CD4-positive, alpha-beta T cell (primary cell): ENCODE measurements at regions of chr22 and their contacts with region 1.

Region 1: GRCh38 chr22:23786752-23787599 is at the start of gene SMARCB1:
- DNase-seq: peak; percentile 80 to 96 (median 88)
- ATAC-seq: peak; percentile 76
- H3K4me3 ChIP-seq: peak within 1 kb of the TSS; percentile 83
- H3K4me3 Mint-ChIP-seq: peak within 1 kb of the TSS; percentile 91
- H3K27ac ChIP-seq: peak within 1 kb of the TSS; percentile 93 to 98
- H3K27ac Mint-ChIP-seq: peak within 1 kb of the TSS; percentile 90
- H3K4me1 ChIP-seq: peaks cover 44% of the 10 kb centered on the region
- H3K4me1 Mint-ChIP-seq: peaks cover 35% of the 10 kb centered on the region
- H3K27me3 ChIP-seq: no peaks in the 10 kb centered on the region
- H3K27me3 Mint-ChIP-seq: no peaks in the 10 kb centered on the region
- CTCF ChIP-seq: no peak
- total RNA-seq, gene SMARCB1: 40.3 to 41.7 TPM

Region 2: DNA sequence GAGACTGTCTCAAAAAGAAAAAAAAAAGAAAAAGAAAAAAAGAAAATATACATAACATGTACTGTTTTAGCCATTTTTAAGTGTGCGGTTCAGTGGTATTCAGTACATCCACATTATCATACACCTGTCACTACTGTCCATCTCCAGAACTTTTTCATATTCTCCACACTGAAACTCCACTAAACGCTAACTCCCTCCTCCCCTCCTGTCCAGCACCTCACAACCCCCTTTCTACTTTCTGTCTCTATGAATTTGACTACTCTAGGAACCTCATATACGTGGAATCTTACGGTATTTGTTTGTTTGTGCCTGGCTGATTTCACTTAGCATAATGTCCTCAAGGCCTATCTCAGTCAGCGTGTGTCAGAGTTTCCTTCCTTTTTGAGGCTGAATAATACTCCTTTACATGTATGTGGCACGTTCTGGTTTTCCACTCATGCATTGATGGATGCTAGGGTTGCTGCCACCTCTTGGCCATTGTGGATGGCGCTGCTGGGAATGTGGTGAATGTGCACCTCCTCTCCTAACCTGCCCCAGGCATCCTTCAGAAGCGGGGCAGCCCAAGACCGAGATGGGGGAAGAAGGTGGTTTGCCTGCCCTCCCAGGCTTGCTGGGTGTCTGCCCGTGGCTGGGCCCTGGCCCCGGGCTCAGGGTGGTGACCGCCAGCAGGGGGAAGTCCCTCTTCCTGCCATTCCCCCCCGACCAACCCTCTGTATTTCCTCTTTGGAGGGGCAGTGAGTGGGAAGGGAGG is 546.2 kb before region 1 on chr22:
- CTCF ChIA-PET with region 1: no interaction called
- POLR2A ChIA-PET with region 1: no interaction called
- intact Hi-C with region 1: no loop called
- DNase-seq: peak in 5 of 14 experiments; percentile 32 to 66 (median 46)
- ATAC-seq: no peak
- H3K4me3 ChIP-seq: no peak overlapping the region
- H3K4me3 Mint-ChIP-seq: no peak overlapping the region
- H3K27ac ChIP-seq: peak overlapping the region; percentile 33 to 78
- H3K27ac Mint-ChIP-seq: peak overlapping the region; percentile 91
- H3K4me1 ChIP-seq: peaks cover 90% of the 10 kb centered on the region
- H3K4me1 Mint-ChIP-seq: peaks cover 86% of the 10 kb centered on the region
- H3K27me3 ChIP-seq: no peaks in the 10 kb centered on the region
- H3K27me3 Mint-ChIP-seq: no peaks in the 10 kb centered on the region
- CTCF ChIP-seq: no peak

Region 3: DNA sequence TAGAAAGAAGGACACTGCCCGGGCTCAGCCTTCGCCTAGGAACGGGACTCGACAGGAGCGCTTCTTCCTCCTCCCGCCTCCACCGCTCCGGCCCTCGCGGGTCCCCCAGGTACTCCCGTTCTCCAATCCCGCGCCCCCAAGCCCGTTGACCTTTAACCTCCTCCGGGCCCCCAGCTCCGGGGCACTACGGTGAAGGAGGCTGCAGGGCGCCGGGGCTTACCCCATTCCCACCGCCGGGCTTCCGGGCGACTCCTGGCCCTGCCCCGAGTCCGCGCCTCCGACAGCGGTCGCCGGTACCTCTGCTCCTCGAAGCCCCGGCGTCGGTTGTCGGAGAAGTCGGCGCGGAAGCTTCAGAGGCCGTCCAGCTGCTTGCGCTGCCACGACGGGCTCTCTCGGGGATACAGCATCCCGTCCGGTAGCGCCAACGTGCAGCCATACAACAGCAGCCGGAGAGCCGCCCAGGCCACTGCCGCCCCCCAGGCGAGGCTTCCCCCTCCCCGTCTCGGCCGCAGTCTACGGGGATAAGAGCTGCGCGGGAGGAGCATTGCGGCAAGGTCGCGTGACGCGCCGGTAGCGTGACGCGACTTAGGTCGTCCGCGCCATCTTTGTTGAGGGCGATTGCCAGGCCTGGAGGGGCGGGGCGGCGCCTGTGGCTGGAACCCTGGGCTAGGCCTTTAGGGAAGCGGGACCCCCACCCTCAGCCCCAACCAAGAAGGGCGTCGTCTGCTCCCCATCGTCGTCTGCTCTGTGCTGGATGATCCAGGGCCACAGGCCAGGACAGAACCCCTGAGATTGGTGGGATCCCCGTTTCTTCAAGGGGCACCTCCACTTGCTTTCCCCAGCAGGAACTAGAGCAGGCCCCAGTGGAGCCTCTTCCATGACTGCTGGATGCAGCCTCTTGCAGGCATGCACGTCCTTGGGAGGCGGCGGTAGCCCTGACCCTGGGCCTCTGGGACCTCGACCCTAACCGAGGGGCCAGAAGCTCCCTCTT is 69.9 kb before region 1 on chr22:
- CTCF ChIA-PET with region 1: no interaction called
- POLR2A ChIA-PET with region 1: interaction called, 5 read pairs
- intact Hi-C with region 1: loop called (anchors 5 kb)
- DNase-seq: peak; percentile 65 to 92 (median 76)
- ATAC-seq: peak; percentile 97
- H3K4me3 ChIP-seq: peak overlapping the region; percentile 93
- H3K4me3 Mint-ChIP-seq: peak overlapping the region; percentile 90
- H3K27ac ChIP-seq: peak overlapping the region; percentile 64 to 68
- H3K27ac Mint-ChIP-seq: peak overlapping the region; percentile 85
- H3K4me1 ChIP-seq: peaks cover 27% of the 10 kb centered on the region
- H3K4me1 Mint-ChIP-seq: peaks cover 16% of the 10 kb centered on the region
- H3K27me3 ChIP-seq: no peaks in the 10 kb centered on the region
- H3K27me3 Mint-ChIP-seq: no peaks in the 10 kb centered on the region
- CTCF ChIP-seq: no peak

Region 4: GRCh38 chr22:23756891-23757290 is 30.1 kb before region 1 on chr22:
- CTCF ChIA-PET with region 1: no interaction called
- POLR2A ChIA-PET with region 1: no interaction called
- intact Hi-C with region 1: no loop called
- DNase-seq: no peak
- ATAC-seq: no peak
- H3K4me3 ChIP-seq: no peak overlapping the region
- H3K4me3 Mint-ChIP-seq: no peak overlapping the region
- H3K27ac ChIP-seq: no peak overlapping the region
- H3K27ac Mint-ChIP-seq: no peak overlapping the region
- H3K4me1 ChIP-seq: no peaks in the 10 kb centered on the region
- H3K4me1 Mint-ChIP-seq: no peaks in the 10 kb centered on the region
- H3K27me3 ChIP-seq: no peaks in the 10 kb centered on the region
- H3K27me3 Mint-ChIP-seq: no peaks in the 10 kb centered on the region
- CTCF ChIP-seq: no peak

Region 5: DNA sequence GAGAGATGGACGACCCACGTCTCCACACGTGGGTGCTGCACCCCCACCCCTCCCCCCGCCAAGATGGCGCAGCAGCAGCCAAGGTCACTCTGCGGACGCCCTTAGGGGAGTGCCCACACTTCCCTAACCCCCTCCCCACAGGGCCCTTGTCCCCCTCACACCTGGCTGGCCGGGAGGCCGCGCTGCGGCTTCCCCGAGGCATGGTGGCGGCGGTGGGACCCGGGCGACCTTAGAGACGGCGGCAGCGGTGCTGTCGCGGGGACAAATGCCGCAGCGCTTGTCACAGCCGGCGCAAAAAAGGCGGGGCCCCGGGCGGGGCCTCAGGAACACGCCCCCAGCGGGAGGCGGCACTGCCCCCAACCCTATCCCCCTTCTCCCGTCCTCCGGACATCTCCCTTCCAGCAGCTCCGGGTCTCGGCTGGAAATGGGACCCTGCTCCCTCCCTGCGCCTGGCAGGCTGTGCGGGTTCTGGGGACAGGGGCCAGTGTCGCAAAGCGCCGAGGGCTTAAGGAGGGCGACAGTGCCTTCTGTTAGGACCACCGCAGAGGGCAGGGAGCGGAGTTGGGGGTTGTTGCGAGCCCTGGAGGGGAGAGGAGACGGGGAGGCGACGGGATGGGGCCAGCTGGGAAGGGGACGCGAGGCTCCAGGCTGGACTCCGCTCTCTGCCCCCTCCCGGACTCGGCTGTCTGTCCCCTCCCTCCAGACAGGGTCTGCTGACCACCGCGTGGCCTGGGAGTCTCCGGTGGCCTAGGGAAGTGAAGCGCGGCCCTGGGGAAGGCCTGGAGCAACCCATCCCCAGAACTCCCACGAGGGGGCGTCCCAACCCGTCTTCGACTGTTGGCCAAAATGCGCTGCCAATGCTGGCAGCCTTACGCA is 19.1 kb before region 1 on chr22 and contains the start of gene CHCHD10:
- CTCF ChIA-PET with region 1: interaction called, 7 read pairs
- POLR2A ChIA-PET with region 1: interaction called, 17 read pairs
- intact Hi-C with region 1: loop called in 1 of 2 experiments (anchors 1 kb)
- DNase-seq: peak; percentile 55 to 84 (median 70)
- ATAC-seq: peak; percentile 72
- H3K4me3 ChIP-seq: peak within 1 kb of the TSS; percentile 85
- H3K4me3 Mint-ChIP-seq: peak within 1 kb of the TSS; percentile 85
- H3K27ac ChIP-seq: peak within 1 kb of the TSS in 1 of 2 donors; percentile 23
- H3K27ac Mint-ChIP-seq: peak within 1 kb of the TSS; percentile 51
- H3K4me1 ChIP-seq: peaks cover 66% of the 10 kb centered on the region
- H3K4me1 Mint-ChIP-seq: peaks cover 29% of the 10 kb centered on the region
- H3K27me3 ChIP-seq: no peaks in the 10 kb centered on the region
- H3K27me3 Mint-ChIP-seq: no peaks in the 10 kb centered on the region
- CTCF ChIP-seq: peak; percentile 62
- total RNA-seq, gene CHCHD10: 34.4 to 43.0 TPM

Region 6: GRCh38 chr22:23857606-23858483 is 70.9 kb after region 1 on chr22 and contains the start of gene SLC2A11:
- CTCF ChIA-PET with region 1: no interaction called
- POLR2A ChIA-PET with region 1: interaction called, 8 read pairs
- intact Hi-C with region 1: loop called in 1 of 2 experiments (anchors 5 kb)
- DNase-seq: peak; percentile 85 to 99 (median 92)
- ATAC-seq: peak; percentile 93
- H3K4me3 ChIP-seq: peak within 1 kb of the TSS; percentile 87
- H3K4me3 Mint-ChIP-seq: peak within 1 kb of the TSS; percentile 97
- H3K27ac ChIP-seq: peak within 1 kb of the TSS; percentile 56 to 61
- H3K27ac Mint-ChIP-seq: peak within 1 kb of the TSS; percentile 82
- H3K4me1 ChIP-seq: peaks cover 25% of the 10 kb centered on the region
- H3K4me1 Mint-ChIP-seq: peaks cover 20% of the 10 kb centered on the region
- H3K27me3 ChIP-seq: no peaks in the 10 kb centered on the region
- H3K27me3 Mint-ChIP-seq: no peaks in the 10 kb centered on the region
- CTCF ChIP-seq: no peak
- total RNA-seq, gene SLC2A11: 9.9 to 11.5 TPM

Region 7: DNA sequence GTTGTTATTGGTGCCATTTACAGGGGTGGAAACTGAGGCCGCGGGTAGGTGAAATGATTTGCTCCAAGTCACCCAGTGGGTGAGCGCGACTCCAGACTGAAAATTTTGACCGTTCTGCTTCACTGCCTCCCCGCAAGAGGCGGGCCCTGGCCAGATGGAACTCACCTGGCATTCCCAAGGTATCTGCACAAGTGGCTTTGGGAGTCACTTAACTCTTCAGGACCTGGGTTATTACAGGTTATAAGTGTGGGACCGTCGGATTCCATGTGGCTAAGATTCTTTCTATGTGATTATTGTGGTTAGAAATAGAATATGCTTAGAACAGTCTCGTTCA is 224.7 kb after region 1 on chr22:
- CTCF ChIA-PET with region 1: no interaction called
- POLR2A ChIA-PET with region 1: interaction called, 11 read pairs
- intact Hi-C with region 1: loop called (anchors 10 kb)
- DNase-seq: no peak
- ATAC-seq: no peak
- H3K4me3 ChIP-seq: peak overlapping the region; percentile 99
- H3K4me3 Mint-ChIP-seq: peak overlapping the region; percentile 99
- H3K27ac ChIP-seq: peak overlapping the region; percentile 73 to 86
- H3K27ac Mint-ChIP-seq: peak overlapping the region; percentile 94
- H3K4me1 ChIP-seq: peaks cover 22% of the 10 kb centered on the region
- H3K4me1 Mint-ChIP-seq: peaks cover 48% of the 10 kb centered on the region
- H3K27me3 ChIP-seq: no peaks in the 10 kb centered on the region
- H3K27me3 Mint-ChIP-seq: no peaks in the 10 kb centered on the region
- CTCF ChIP-seq: no peak